Activated CD8-positive, alpha-beta memory T cell treated with anti-CD3 and anti-CD28 coated beads, Interleukin-2, amount 10 ng/mL, durations not matched to agents 7 days and 5 days (primary cell): ENCODE measurements at regions of chr15 and their contacts with region 1.

Region 1: DNA sequence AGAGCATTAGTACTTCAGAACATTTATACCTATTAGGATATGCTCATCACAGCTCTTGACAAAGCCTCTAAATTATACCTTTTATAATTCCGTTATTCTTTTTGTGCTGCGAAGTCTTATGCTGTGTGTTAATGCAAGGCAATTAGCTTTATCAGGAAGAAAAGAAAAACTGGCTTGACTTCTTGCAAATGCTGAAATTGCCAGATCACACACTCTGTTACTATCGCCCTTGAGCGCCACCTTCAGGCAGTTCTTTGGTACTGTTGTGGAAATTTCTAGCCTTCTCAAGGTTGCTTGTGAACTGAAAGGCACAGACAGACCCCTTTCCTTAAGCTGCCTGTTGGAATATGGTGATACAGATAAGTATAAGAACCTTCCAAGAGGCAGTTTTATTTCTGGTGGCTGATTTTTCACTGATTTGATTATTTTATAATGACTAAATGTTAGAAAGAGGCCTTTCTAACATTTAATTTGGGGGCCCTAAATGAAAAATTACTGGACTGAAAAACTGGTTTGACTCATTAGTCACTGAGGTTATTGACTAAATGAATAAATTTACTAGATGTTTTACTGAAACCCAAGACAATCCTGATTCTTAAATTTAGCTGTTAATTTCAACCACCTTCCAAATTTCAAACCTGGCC is 126.2 kb upstream of the RASGRP1 start:
- DNase-seq: peak; percentile 89
- ATAC-seq: peak; percentile 45
- H3K4me3 Mint-ChIP-seq: no peak overlapping the region
- H3K27ac Mint-ChIP-seq: peak overlapping the region; percentile 96
- H3K4me1 Mint-ChIP-seq: peaks cover 88% of the 10 kb centered on the region
- H3K27me3 Mint-ChIP-seq: no peaks in the 10 kb centered on the region

Region 2: GRCh38 chr15:38320181-38320580 is 370.6 kb before region 1 on chr15:
- CTCF ChIA-PET with region 1: no interaction called
- DNase-seq: no peak
- ATAC-seq: no peak
- H3K4me3 Mint-ChIP-seq: no peak overlapping the region
- H3K27ac Mint-ChIP-seq: no peak overlapping the region
- H3K4me1 Mint-ChIP-seq: no peaks in the 10 kb centered on the region
- H3K27me3 Mint-ChIP-seq: peaks cover 29% of the 10 kb centered on the region

Region 3: GRCh38 chr15:38453971-38454695 is 236.7 kb before region 1 on chr15 and contains the start of gene FAM98B:
- CTCF ChIA-PET with region 1: interaction called, 50 read pairs
- DNase-seq: peak; percentile 92
- ATAC-seq: peak; percentile 96
- H3K4me3 Mint-ChIP-seq: peak within 1 kb of the TSS; percentile 94
- H3K27ac Mint-ChIP-seq: peak within 1 kb of the TSS; percentile 92
- H3K4me1 Mint-ChIP-seq: peaks cover 34% of the 10 kb centered on the region
- H3K27me3 Mint-ChIP-seq: peaks cover 15% of the 10 kb centered on the region
- total RNA-seq, gene FAM98B: 34.8 to 41.4 TPM

Region 4: GRCh38 chr15:38482572-38482971 is 208.2 kb before region 1 on chr15:
- CTCF ChIA-PET with region 1: interaction called, 79 read pairs
- DNase-seq: no peak
- ATAC-seq: no peak
- H3K4me3 Mint-ChIP-seq: no peak overlapping the region
- H3K27ac Mint-ChIP-seq: peak overlapping the region; percentile 65
- H3K4me1 Mint-ChIP-seq: peaks cover 30% of the 10 kb centered on the region
- H3K27me3 Mint-ChIP-seq: no peaks in the 10 kb centered on the region

Region 5: DNA sequence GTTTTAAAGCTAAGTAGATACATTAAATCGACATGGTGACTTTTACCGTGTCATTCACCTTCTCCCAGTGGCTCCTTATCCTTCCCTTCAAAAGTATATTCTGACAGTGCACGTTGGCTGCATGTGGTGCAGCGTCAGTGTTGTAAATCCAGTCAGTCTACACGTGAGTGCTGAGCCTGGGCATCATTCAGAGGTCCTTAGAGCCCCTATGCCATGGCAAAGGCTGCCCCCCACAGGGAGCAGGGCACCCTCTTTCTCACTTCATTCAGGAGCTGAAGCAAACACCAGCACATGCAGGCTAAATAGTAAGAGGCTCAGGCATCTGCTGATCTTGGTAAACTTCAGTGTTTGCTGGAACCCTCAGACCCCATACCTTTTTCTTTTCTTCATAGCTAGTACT is 169.5 kb before region 1 on chr15:
- CTCF ChIA-PET with region 1: interaction called, 18 read pairs
- DNase-seq: no peak
- ATAC-seq: peak; percentile 21
- H3K4me3 Mint-ChIP-seq: no peak overlapping the region
- H3K27ac Mint-ChIP-seq: peak overlapping the region; percentile 59
- H3K4me1 Mint-ChIP-seq: peaks cover 55% of the 10 kb centered on the region
- H3K27me3 Mint-ChIP-seq: no peaks in the 10 kb centered on the region

Region 6: DNA sequence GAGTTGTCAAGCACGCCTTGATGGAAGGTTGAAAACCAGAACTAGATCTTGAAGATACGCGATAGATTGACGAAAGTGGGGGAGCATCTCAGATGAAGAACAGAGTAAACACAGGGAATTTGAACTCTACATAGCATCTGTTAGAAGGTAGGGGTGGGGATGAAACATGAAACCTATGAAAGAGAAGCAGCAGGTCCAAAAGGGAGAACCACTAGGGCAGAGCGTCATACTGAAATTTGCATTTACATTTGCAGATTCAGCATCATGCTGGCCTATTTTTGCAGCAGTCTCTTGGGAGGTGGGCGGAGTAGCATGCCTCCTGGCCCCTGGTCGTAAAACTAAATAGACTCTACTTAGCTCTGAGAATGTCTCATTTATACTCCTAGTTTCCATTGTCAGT is 80.1 kb before region 1 on chr15:
- CTCF ChIA-PET with region 1: interaction called, 16 read pairs
- DNase-seq: peak; percentile 74
- ATAC-seq: peak; percentile 73
- H3K4me3 Mint-ChIP-seq: peak overlapping the region; percentile 53
- H3K27ac Mint-ChIP-seq: peak overlapping the region; percentile 93
- H3K4me1 Mint-ChIP-seq: peaks cover 67% of the 10 kb centered on the region
- H3K27me3 Mint-ChIP-seq: no peaks in the 10 kb centered on the region

Region 7: DNA sequence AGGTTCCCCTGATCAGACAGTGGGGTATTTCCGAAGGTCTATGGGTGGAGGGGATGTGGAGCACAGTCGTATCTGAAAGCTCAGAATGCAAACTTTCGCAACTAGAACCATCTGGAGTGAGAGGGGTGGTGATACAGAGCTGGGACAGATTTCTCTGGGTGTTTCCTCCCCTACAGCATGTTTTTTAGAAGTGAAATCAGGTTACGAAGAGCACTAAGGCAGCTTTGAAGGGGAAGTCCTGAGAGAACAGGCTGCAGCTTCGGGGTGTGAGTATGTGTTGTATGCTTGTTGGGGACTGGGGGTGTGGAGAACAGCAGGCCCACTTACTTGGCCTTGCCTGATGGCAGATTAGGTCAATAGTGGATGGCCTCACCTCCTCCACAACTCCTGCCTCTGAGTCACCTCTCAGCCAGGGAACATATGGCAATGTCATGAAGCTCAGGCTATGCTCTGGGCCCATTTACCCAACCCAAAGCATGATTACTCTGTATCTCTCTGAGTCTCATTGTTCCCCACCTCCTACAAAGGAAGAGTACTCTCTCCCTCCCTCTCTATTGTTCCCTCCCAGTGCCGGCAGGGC is 19.0 kb before region 1 on chr15:
- CTCF ChIA-PET with region 1: interaction called, 76 read pairs
- DNase-seq: peak; percentile 56
- ATAC-seq: peak; percentile 31
- H3K4me3 Mint-ChIP-seq: peak overlapping the region; percentile 51
- H3K27ac Mint-ChIP-seq: peak overlapping the region; percentile 98
- H3K4me1 Mint-ChIP-seq: peaks cover 80% of the 10 kb centered on the region
- H3K27me3 Mint-ChIP-seq: no peaks in the 10 kb centered on the region